Activated CD4-positive, alpha-beta T cell treated with anti-CD3 and anti-CD28 coated beads for 36 hours (primary cell): ENCODE measurements at regions of chr10 and their contacts with region 1.

Region 1: DNA sequence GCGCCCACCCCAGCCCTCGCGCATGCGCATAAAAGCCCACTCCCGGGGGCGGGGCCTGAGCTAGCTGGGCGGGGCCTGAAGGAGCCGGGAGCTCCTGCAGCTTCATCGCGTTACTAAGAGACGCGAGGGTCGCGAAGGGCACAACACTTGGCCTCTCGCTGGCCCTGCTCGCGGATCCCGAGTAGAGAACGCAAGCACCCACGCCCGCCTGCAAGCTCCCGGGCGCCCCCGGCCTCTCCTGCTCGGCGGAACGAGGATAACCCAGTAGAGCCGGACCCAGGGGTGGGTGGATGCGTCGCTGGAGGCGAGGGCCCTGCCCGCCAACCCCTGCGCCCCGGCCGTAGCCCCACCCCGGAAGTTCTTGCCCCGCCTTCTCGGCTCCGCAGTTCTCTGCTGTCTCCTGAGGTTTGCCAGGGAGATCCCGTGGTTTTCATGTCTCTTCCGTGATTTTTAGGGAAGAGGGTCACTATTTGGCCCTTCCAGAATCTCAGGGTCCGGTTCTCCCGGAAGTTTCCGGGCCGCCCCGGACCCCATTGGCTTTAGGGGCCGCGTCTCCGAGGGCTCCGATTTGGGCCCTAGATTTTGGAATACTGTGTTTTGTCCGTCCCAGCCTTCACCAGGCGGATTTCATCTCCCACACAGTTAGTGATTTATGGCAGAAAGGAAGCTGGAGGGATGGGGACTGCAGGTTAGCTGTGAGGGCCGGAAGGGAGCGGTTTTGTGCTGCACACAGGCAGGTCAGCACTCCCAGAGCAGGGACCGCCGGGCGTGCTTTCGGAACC is at the start of gene MEIG1:
- DNase-seq: peak; percentile 96
- ATAC-seq: peak; percentile 87
- H3K4me3 Mint-ChIP-seq: peak within 1 kb of the TSS; percentile 97
- H3K27ac Mint-ChIP-seq: peak within 1 kb of the TSS; percentile 98
- H3K4me1 Mint-ChIP-seq: peaks cover 26% of the 10 kb centered on the region
- H3K27me3 Mint-ChIP-seq: no peaks in the 10 kb centered on the region
- total RNA-seq, gene MEIG1: 0.81 to 1.1 TPM

Region 2: GRCh38 chr10:13348216-13349017 is 1611.0 kb before region 1 on chr10 and contains the start of gene SEPHS1:
- CTCF ChIA-PET with region 1: no interaction called
- POLR2A ChIA-PET with region 1: no interaction called
- intact Hi-C with region 1: loop called in 1 of 2 experiments (anchors 10 kb)
- DNase-seq: peak; percentile 93
- ATAC-seq: peak; percentile 77
- H3K4me3 Mint-ChIP-seq: peak within 1 kb of the TSS; percentile 87
- H3K27ac Mint-ChIP-seq: peak within 1 kb of the TSS; percentile 95
- H3K4me1 Mint-ChIP-seq: peaks cover 57% of the 10 kb centered on the region
- H3K27me3 Mint-ChIP-seq: no peaks in the 10 kb centered on the region
- total RNA-seq, gene SEPHS1: 74.5 to 74.7 TPM

Region 3: GRCh38 chr10:14588084-14588937 is 371.2 kb before region 1 on chr10:
- CTCF ChIA-PET with region 1: no interaction called
- POLR2A ChIA-PET with region 1: no interaction called
- intact Hi-C with region 1: loop called (anchors 5 to 10 kb)
- DNase-seq: peak; percentile 77
- ATAC-seq: peak; percentile 70
- H3K4me3 Mint-ChIP-seq: peak overlapping the region; percentile 40
- H3K27ac Mint-ChIP-seq: peak overlapping the region; percentile 89
- H3K4me1 Mint-ChIP-seq: peaks cover 93% of the 10 kb centered on the region
- H3K27me3 Mint-ChIP-seq: no peaks in the 10 kb centered on the region

Region 4: GRCh38 chr10:14670551-14671240 is 288.8 kb before region 1 on chr10:
- CTCF ChIA-PET with region 1: no interaction called
- POLR2A ChIA-PET with region 1: no interaction called
- intact Hi-C with region 1: no loop called
- DNase-seq: no peak
- ATAC-seq: no peak
- H3K4me3 Mint-ChIP-seq: no peak overlapping the region
- H3K27ac Mint-ChIP-seq: no peak overlapping the region
- H3K4me1 Mint-ChIP-seq: peaks cover 15% of the 10 kb centered on the region
- H3K27me3 Mint-ChIP-seq: no peaks in the 10 kb centered on the region

Region 5: DNA sequence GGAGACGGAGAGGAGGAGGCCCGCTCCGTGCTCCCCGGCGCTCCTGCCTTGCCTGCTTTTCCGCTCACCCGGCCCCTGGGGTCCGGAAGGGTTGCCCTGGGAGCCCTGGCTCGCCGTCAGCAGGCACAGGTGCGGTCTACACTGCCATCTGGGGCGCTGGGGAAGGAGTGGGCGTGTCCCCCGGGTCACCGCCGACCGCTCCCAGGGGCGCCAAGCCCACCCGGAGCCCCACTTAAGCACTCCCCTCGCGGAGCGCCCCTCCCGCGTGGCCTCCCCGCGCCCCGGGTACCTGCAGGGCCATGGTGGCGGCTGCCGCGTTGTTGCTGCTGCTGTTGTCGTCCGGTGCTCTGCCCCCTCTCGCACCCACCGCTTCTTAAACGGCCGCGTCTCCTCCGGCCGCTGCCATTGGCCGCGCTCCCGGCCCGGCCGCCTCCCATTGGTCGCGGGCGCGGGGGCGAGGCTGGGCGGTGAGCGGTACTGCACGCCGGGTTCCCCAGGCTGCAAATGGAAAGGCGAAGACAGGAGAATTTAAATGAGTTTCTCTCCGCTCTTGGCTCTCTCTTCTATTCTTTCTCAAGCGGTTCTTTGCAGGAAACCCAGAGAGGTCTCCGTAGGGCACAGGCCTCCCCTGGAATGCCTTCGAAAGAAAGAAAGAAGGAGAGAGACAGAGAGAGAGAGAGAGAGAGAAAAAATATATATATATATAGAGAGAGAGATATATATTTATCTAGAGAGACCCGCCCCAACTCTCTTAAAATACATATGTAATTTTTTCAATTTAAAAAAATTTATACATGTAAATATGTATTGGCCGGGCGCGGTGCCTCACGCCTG is 129.2 kb after region 1 on chr10 and contains the start of gene ACBD7:
- CTCF ChIA-PET with region 1: no interaction called
- POLR2A ChIA-PET with region 1: no interaction called
- intact Hi-C with region 1: loop called in 1 of 2 experiments (anchors 2 kb)
- DNase-seq: peak; percentile 91
- ATAC-seq: peak; percentile 91
- H3K4me3 Mint-ChIP-seq: peak within 1 kb of the TSS; percentile 67
- H3K27ac Mint-ChIP-seq: no peak within 1 kb of the TSS
- H3K4me1 Mint-ChIP-seq: peaks cover 19% of the 10 kb centered on the region
- H3K27me3 Mint-ChIP-seq: no peaks in the 10 kb centered on the region
- total RNA-seq, gene ACBD7: 2.4 to 2.6 TPM

Region 6: GRCh38 chr10:16436758-16437539 is 1477.5 kb after region 1 on chr10 and contains the start of gene PTER:
- CTCF ChIA-PET with region 1: no interaction called
- POLR2A ChIA-PET with region 1: no interaction called
- intact Hi-C with region 1: loop called in 1 of 2 experiments (anchors 5 kb)
- DNase-seq: peak; percentile 99
- ATAC-seq: peak; percentile 99
- H3K4me3 Mint-ChIP-seq: peak within 1 kb of the TSS; percentile 89
- H3K27ac Mint-ChIP-seq: peak within 1 kb of the TSS; percentile 92
- H3K4me1 Mint-ChIP-seq: peaks cover 39% of the 10 kb centered on the region
- H3K27me3 Mint-ChIP-seq: no peaks in the 10 kb centered on the region
- total RNA-seq, gene PTER: 33.1 to 34.5 TPM